Cardiac septum (tissue), 1 donor: ENCODE measurements at regions of chr2 and their contacts with region 1.

Region 1: DNA sequence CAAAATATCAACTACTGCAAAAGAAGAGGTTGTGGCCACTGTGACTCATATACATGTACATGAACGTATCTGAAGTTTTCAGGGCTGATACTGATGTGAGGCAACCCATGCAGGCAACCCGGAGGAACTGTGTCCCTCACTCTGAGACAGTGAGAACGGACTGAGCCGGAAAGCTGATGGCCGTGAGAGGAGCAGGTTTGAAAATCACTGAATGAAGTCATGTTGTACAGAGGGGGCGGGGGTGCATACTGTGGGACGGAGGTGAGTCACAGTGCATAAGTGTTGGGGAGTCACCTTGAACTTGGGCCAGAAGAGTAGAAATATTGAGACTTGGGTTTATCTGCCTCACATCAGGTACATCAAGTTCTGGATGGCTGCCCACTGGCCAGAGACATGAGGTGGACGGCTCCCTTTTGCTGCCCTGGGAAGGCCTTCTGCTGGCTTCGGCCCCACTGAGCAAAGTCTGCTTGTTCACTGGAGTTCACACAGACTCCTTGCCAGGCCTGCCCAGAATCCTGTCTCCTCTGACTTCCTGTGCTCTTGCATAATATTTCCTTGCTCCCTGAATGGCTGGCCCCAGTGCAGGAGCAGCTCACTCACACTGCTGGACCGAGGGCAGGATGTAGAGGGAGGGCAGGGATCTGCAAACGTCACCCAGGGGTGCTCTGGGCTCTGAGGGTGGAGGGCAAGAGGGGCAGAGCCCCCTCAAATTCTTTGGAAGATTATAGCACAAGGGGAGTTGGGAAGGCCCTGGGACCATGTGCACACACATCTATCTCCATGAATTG is 18.1 kb downstream of the EPAS1 start:
- DNase-seq: peak; percentile 92

Region 2: DNA sequence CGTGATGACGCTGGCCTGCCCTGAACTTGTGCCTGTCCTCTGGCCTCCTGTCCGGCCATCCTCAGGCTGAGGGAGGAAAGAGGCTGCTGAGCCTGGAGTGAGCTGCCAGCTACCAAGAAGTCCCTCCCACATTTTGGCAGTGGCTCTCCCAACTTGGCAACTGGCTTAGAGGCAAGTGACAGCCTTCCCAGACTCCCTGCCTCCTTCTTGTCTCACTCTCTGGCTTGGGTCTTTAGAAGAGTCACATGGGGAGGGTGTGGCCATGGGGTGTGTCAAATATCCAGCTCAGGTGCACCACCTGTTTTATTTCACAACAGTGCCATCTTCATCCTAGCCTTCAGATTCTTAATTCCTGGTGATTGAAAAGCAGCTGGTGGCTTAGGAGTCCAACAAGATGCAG is 441.0 kb before region 1 on chr2:
- intact Hi-C with region 1: no loop called
- DNase-seq: no peak

Region 3: GRCh38 chr2:46200220-46200621 is 115.1 kb before region 1 on chr2:
- intact Hi-C with region 1: no loop called
- DNase-seq: no peak

Region 4: DNA sequence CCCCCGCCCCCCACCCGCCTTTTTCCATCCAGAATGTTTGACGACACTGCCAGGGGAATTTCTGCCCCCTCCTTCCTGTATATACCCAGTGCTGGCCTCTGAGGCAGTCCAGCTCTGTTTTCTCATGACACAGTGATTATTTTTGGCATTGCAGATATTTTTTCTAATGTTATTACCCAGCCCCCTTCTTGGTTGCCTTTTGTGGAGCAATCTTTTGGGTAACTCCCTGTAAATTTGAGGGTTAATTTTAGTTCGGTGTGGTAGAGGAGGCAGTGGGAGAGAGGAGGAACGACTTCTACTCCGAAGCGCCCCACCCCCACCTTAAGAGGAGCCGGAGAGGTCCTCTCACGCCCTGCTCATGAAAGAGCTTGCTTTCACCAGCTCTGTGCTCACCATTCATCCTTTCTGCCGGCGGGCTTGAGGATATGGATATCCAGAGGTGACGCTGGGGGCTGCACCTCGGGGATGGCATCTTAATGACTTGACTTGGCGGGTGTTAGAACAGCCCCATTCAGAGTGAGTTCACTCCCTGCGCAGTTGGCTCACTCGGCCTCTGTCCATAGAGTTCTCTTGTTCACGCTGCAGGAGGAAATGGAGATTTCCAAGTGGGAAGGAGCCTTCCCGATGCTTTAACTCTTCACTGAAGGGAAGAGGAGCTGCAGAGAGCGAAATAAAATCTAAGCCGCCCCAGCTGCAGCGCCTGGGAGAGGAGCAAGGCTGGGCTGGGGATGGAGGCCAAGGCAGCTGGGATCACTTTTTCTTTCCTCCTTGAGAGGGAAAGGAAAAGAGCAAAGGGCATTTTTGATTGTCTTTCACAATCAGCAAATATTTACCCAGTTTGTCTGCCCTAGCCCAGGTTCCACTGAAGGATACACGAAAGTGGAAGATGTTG is 20.3 kb after region 1 on chr2:
- intact Hi-C with region 1: loop called (anchors 2 kb)
- DNase-seq: no peak

Region 5: GRCh38 chr2:46351750-46352138 is 36.4 kb after region 1 on chr2:
- intact Hi-C with region 1: loop called (anchors 5 kb)
- DNase-seq: no peak

Region 6: GRCh38 chr2:46451131-46451711 is 135.9 kb after region 1 on chr2:
- intact Hi-C with region 1: no loop called
- DNase-seq: no peak

Region 7: DNA sequence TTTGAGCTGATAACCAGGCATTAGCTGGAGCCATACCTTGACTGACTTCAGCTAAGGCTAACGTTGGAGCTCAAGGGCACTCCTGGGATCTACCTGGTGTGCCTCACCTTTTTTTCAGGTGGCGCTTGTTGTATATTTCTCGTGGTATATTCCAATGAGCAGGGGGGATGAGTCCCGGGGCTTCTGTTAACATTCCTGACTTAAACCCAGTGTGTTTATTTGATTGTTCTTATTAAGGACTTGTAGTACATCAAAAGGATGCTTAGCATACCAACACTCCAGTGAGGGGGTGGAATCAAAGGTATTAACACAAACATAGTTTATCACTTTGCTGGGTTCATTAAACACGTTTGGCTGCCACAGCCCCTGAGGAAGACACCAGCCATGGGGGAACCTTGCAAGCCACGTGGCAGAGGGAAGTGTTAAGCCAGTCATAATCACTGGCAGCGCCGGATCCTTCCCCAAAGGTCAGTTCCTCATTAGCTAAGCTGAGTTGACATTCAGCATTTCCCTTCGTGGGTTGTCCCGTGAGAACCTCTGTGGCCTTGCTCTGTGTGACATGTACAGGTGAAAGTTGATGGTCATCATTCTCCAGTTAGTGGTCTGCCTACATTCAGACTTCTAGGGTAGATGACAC is 719.8 kb after region 1 on chr2:
- intact Hi-C with region 1: no loop called
- DNase-seq: peak; percentile 91